ENCODE measurements at regions of chr16 and their contacts with region 1.

Region 1: GRCh38 chr16:68800257-68800875 is 43.0 kb upstream of the TANGO6 start:
- DNase-seq: peak; percentile 77 to 81
- ATAC-seq: peak; percentile 93 to 96
- H3K4me3 ChIP-seq: no peak overlapping the region
- H3K27ac ChIP-seq: peak overlapping the region; percentile 41 to 57; a peak in 4 of 6 replicates
- H3K4me1 ChIP-seq: peaks cover 10% of the 10 kb centered on the region; the same call in 2 of the 3 replicates
- CTCF ChIP-seq: peak; percentile 81
- EP300 ChIP-seq: no peak
- POLR2A ChIP-seq: no peak
- RAD21 ChIP-seq: peak; percentile 88 to 93

Region 2: DNA sequence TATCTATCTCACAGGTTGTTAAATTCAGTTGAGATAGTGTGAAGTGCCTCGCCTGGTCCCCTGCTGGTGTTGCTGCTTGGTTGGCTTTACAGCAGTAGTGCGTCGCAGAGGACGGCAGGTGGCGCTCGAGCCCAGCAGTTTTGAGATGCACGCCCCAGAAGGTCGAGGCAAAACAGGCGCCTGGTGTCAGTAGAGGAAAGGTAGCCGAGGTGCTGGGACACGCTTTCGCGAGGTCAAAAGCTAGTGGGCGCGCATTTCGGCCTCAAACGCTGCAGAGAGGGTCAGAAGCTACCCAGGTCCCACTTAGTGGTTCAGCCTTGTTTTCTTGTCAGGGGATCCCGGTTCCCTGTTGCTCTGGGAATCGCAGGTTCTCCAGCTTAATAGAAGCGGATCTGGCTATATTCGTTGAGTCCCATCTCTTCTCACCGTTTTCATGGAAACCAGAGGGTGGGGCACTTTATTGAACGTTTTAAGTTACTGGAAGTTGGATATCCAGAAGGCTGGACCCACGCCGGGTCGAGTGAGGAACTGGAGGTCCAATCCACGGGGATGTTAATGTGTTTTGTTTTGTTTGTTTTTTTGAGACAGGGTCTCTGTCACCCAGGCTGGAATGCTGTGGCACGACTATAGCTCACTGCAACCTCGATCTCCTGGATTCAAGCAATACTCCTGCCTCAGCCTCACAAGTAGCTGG is 271.5 kb before region 1 on chr16:
- CTCF ChIA-PET with region 1: interaction called, 16 read pairs
- POLR2A ChIA-PET with region 1: no interaction called
- DNase-seq: peak; percentile 87 to 90
- ATAC-seq: peak; percentile 83 to 88
- H3K4me3 ChIP-seq: peak overlapping the region; percentile 14; the same call in 1 of the 3 replicates
- H3K27ac ChIP-seq: no peak overlapping the region
- H3K4me1 ChIP-seq: peaks cover 4% of the 10 kb centered on the region; the same call in 1 of the 3 replicates
- CTCF ChIP-seq: peak; percentile 95
- EP300 ChIP-seq: no peak
- POLR2A ChIP-seq: no peak
- RAD21 ChIP-seq: peak; percentile 95 to 96

Region 3: GRCh38 chr16:68704232-68704867 is 96.0 kb before region 1 on chr16:
- CTCF ChIA-PET with region 1: interaction called, 28 read pairs
- POLR2A ChIA-PET with region 1: no interaction called
- DNase-seq: peak; percentile 82 to 89
- ATAC-seq: peak; percentile 84 to 86
- H3K4me3 ChIP-seq: no peak overlapping the region
- H3K27ac ChIP-seq: peak overlapping the region in 1 of 2 experiments; percentile 46; a peak in 3 of 6 replicates
- H3K4me1 ChIP-seq: peaks cover 20% of the 10 kb centered on the region
- CTCF ChIP-seq: peak; percentile 90
- EP300 ChIP-seq: no peak
- POLR2A ChIP-seq: no peak
- RAD21 ChIP-seq: peak; percentile 97

Region 4: DNA sequence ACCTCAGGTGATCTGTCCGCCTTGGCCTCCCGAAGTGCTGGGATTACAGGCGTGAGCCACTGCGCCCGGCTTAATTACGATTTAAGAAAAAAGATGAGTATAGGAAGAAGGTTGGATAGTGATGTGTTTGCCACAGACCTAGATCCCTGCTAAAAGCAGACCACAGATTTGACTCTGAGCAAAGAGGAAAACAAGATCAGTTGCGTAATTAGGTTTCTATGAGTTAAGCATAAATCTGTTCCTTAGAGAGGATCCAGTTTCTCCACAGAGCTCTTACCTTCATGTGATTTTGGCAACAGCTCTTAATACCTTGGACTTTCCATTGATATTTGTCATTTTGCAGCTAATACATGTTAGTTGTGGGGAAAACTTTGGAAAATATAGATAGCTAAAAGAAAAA is 32.2 kb before region 1 on chr16:
- CTCF ChIA-PET with region 1: interaction called, 13 read pairs
- POLR2A ChIA-PET with region 1: no interaction called
- DNase-seq: no peak
- ATAC-seq: no peak
- H3K4me3 ChIP-seq: no peak overlapping the region
- H3K27ac ChIP-seq: no peak overlapping the region
- H3K4me1 ChIP-seq: peaks cover 11% of the 10 kb centered on the region; the same call in 2 of the 3 replicates
- CTCF ChIP-seq: no peak
- EP300 ChIP-seq: no peak
- POLR2A ChIP-seq: no peak
- RAD21 ChIP-seq: no peak

Region 5: GRCh38 chr16:68790130-68790761 is 10.1 kb before region 1 on chr16:
- CTCF ChIA-PET with region 1: interaction called, 19 read pairs
- POLR2A ChIA-PET with region 1: no interaction called
- DNase-seq: peak; percentile 67 to 70
- ATAC-seq: peak; percentile 76 to 81
- H3K4me3 ChIP-seq: no peak overlapping the region
- H3K27ac ChIP-seq: peak overlapping the region; percentile 75 to 86
- H3K4me1 ChIP-seq: peaks cover 56% of the 10 kb centered on the region
- CTCF ChIP-seq: no peak
- EP300 ChIP-seq: peak in 1 of 2 experiments; percentile 65; a peak in 2 of 5 replicates
- POLR2A ChIP-seq: no peak
- RAD21 ChIP-seq: peak; percentile 2 to 39; a peak in 1 of 5 replicates

Measured in A549 (cell line).